Left colon (tissue), 2 donors: ENCODE measurements at regions of chr17 and their contacts with region 1.

Region 1: GRCh38 chr17:71071837-71072236 is 902.5 kb downstream of the KCNJ2 start:
- DNase-seq: no peak
- ATAC-seq: no peak

Region 2: GRCh38 chr17:71149607-71150006 is 77.8 kb after region 1 on chr17:
- intact Hi-C with region 1: loop called in 1 of 2 experiments (anchors 10 kb)
- DNase-seq: no peak
- ATAC-seq: no peak